ENCODE measurements at regions of chr3 and their contacts with region 1.

Region 1: DNA sequence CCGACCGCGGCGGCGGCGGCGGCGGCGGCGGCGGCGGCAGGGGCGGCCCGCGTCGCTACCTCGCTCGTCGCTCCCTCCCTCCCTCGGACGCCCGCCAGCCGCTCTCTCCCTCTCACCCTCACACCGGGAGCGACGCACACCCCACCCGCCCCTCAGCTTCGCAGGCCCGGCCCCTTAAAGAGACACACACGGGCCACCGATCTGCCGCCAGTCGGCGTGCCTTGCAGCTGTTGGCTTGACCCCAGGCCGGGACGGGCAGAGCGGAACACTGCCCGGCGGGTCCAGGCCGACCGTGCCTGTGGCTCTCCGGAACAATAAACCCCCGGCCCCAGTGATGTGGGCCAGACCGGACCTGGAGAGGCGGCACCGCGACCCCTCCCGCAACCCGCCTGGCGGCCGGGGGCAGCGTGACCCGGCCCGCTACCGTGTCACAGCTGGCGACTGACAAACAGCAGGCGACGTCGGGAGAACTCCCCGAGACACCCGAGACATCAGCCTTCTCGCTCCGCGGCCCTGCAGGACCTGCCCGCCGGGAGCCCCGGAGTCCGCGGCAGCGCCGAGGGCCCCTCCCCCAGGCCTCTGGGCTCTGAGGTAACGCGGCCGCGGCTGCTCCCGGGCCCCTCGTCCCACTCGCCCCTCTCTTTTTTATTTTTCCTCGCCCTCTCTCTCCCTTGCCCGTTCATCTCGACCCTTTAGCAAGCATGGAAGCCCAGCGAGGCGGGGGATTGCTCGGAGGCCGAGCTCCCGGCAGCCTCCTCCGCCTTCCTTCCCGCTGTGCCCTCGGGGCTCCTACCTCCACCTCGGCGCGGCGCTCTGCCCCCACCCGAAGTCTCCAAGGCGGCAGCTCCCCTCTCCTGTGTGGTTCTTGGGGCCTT is at the start of gene SETD2:
- DNase-seq: peak; percentile 92
- ATAC-seq: peak; percentile 85
- H3K4me3 ChIP-seq: peak within 1 kb of the TSS; percentile 77 to 94 (median 90)
- H3K4me3 Mint-ChIP-seq: peak within 1 kb of the TSS; percentile 96
- H3K27ac ChIP-seq: peak within 1 kb of the TSS; percentile 72 to 93
- H3K27ac Mint-ChIP-seq: peak within 1 kb of the TSS; percentile 97
- H3K4me1 ChIP-seq: peaks cover 33 to 44% of the 10 kb centered on the region in 2 donors
- H3K4me1 Mint-ChIP-seq: peaks cover 43% of the 10 kb centered on the region
- H3K27me3 ChIP-seq: no peaks in the 10 kb centered on the region
- H3K27me3 Mint-ChIP-seq: no peaks in the 10 kb centered on the region
- CTCF ChIP-seq: peak; percentile 51
- total RNA-seq, gene SETD2: 91.4 and 98.9 TPM in 2 replicates

Region 2: DNA sequence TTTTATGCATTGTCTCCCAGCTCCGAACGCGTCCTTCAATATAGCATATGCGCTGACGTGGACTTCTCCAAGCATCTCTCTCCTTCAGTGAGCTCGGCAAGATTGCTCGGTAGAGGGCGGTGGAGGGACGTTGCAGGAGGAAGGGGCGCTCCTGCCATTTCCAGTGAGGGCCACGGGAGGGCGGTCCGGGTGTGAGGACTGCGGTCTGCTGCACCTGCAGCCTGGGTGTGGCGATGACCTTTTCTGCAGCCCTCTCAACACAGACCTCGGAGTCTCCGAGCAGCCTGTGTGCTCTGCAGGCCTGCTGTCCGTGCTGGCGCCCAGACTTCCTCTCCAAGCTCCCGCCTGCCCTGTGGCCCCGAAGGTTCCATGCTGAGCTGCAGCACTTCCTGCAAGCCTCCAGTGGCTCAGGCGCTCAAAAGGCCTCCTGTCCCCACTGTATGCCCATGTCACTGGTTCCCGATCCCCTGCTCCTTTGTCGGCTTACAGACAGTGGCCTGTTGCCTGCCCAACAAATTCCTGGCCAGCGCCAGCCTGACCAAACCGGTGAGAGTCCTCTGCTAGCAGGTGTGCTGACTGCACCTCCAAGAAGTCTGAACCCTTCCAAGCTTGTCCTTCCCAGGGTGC is 675.4 kb before region 1 on chr3:
- CTCF ChIA-PET with region 1: no interaction called
- POLR2A ChIA-PET with region 1: no interaction called
- intact Hi-C with region 1: no loop called
- DNase-seq: peak; percentile 95
- ATAC-seq: peak; percentile 99
- H3K4me3 ChIP-seq: no peak overlapping the region
- H3K4me3 Mint-ChIP-seq: peak overlapping the region; percentile 67
- H3K27ac ChIP-seq: no peak overlapping the region
- H3K27ac Mint-ChIP-seq: peak overlapping the region; percentile 74
- H3K4me1 ChIP-seq: peaks cover 9 to 11% of the 10 kb centered on the region in 2 donors
- H3K4me1 Mint-ChIP-seq: peaks cover 9% of the 10 kb centered on the region
- H3K27me3 ChIP-seq: peaks cover 0 to 6% (median 4%) of the 10 kb centered on the region in 4 experiments
- H3K27me3 Mint-ChIP-seq: peaks cover 3% of the 10 kb centered on the region
- CTCF ChIP-seq: peak; percentile 100

Region 3: GRCh38 chr3:46923559-46924350 is 240.5 kb before region 1 on chr3:
- CTCF ChIA-PET with region 1: no interaction called
- POLR2A ChIA-PET with region 1: interaction called, 3 read pairs
- intact Hi-C with region 1: loop called (anchors 5 kb)
- DNase-seq: peak; percentile 66
- ATAC-seq: no peak
- H3K4me3 ChIP-seq: no peak overlapping the region
- H3K4me3 Mint-ChIP-seq: peak overlapping the region; percentile 21
- H3K27ac ChIP-seq: peak overlapping the region; percentile 85 to 92
- H3K27ac Mint-ChIP-seq: peak overlapping the region; percentile 83
- H3K4me1 ChIP-seq: peaks cover 57 to 59% of the 10 kb centered on the region in 2 donors
- H3K4me1 Mint-ChIP-seq: peaks cover 60% of the 10 kb centered on the region
- H3K27me3 ChIP-seq: no peaks in the 10 kb centered on the region
- H3K27me3 Mint-ChIP-seq: no peaks in the 10 kb centered on the region
- CTCF ChIP-seq: peak; percentile 70

Region 4: GRCh38 chr3:47035634-47036033 is 128.6 kb before region 1 on chr3:
- CTCF ChIA-PET with region 1: no interaction called
- POLR2A ChIA-PET with region 1: no interaction called
- intact Hi-C with region 1: loop called (anchors 10 kb)
- DNase-seq: no peak
- ATAC-seq: no peak
- H3K4me3 ChIP-seq: no peak overlapping the region
- H3K4me3 Mint-ChIP-seq: no peak overlapping the region
- H3K27ac ChIP-seq: peak overlapping the region in 1 of 2 donors; percentile 18
- H3K27ac Mint-ChIP-seq: peak overlapping the region; percentile 20
- H3K4me1 ChIP-seq: peaks cover 13 to 18% of the 10 kb centered on the region in 2 donors
- H3K4me1 Mint-ChIP-seq: peaks cover 39% of the 10 kb centered on the region
- H3K27me3 ChIP-seq: no peaks in the 10 kb centered on the region
- H3K27me3 Mint-ChIP-seq: no peaks in the 10 kb centered on the region
- CTCF ChIP-seq: no peak

Region 5: GRCh38 chr3:47176582-47176981 is 12.3 kb after region 1 on chr3:
- CTCF ChIA-PET with region 1: interaction called, 5 read pairs
- POLR2A ChIA-PET with region 1: interaction called, 6 read pairs
- intact Hi-C with region 1: loop called (anchors 1 kb)
- DNase-seq: no peak
- ATAC-seq: no peak
- H3K4me3 ChIP-seq: no peak overlapping the region
- H3K4me3 Mint-ChIP-seq: no peak overlapping the region
- H3K27ac ChIP-seq: no peak overlapping the region
- H3K27ac Mint-ChIP-seq: no peak overlapping the region
- H3K4me1 ChIP-seq: peaks cover 22 to 26% of the 10 kb centered on the region in 2 donors
- H3K4me1 Mint-ChIP-seq: peaks cover 20% of the 10 kb centered on the region
- H3K27me3 ChIP-seq: no peaks in the 10 kb centered on the region
- H3K27me3 Mint-ChIP-seq: no peaks in the 10 kb centered on the region
- CTCF ChIP-seq: no peak

Region 6: DNA sequence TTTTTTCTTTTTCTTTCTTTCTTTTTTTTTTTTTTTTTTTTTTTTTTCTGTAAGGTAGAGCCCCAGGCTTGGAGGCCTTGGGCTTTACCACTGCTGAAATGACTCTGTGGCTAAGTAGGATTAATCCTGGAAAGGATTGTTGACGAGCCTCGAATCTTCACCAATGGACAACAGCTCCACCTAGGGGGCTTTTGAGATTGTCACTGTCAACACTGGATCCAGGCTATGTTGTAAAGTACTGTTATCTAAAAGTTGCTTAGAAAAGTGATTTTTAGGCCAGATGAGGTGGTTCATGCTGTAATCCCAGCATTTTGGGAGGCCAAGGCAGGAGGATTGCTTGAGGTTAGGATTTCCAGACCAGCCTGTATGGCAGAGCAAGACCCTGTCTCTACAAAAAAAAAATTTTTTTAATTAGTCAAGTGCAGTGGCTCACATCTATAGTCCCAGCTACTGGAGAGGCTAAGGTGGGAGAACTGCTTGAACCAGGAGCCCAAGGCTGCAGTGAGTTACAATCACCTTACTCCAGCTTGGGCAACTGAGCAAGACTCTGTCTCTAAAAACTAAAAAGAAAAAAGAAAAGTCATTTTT is 160.1 kb after region 1 on chr3:
- CTCF ChIA-PET with region 1: interaction called, 27 read pairs
- POLR2A ChIA-PET with region 1: no interaction called
- intact Hi-C with region 1: loop called (anchors 2 kb)
- DNase-seq: peak; percentile 67
- ATAC-seq: peak; percentile 71
- H3K4me3 ChIP-seq: no peak overlapping the region
- H3K4me3 Mint-ChIP-seq: no peak overlapping the region
- H3K27ac ChIP-seq: peak overlapping the region in 1 of 2 donors; percentile 31
- H3K27ac Mint-ChIP-seq: no peak overlapping the region
- H3K4me1 ChIP-seq: no peaks in the 10 kb centered on the region
- H3K4me1 Mint-ChIP-seq: peaks cover 5% of the 10 kb centered on the region
- H3K27me3 ChIP-seq: no peaks in the 10 kb centered on the region
- H3K27me3 Mint-ChIP-seq: no peaks in the 10 kb centered on the region
- CTCF ChIP-seq: peak; percentile 91

Region 7: GRCh38 chr3:47813551-47814177 is 649.4 kb after region 1 on chr3:
- CTCF ChIA-PET with region 1: no interaction called
- POLR2A ChIA-PET with region 1: no interaction called
- intact Hi-C with region 1: no loop called
- DNase-seq: no peak
- ATAC-seq: no peak
- H3K4me3 ChIP-seq: no peak overlapping the region
- H3K4me3 Mint-ChIP-seq: no peak overlapping the region
- H3K27ac ChIP-seq: no peak overlapping the region
- H3K27ac Mint-ChIP-seq: no peak overlapping the region
- H3K4me1 ChIP-seq: no peaks in the 10 kb centered on the region
- H3K4me1 Mint-ChIP-seq: peaks cover 2% of the 10 kb centered on the region
- H3K27me3 ChIP-seq: no peaks in the 10 kb centered on the region
- H3K27me3 Mint-ChIP-seq: no peaks in the 10 kb centered on the region
- CTCF ChIP-seq: no peak

Measured in B cell (primary cell).